A549 (cell line): ENCODE measurements at regions of chr19 and their contacts with region 1.

Region 1: GRCh38 chr19:37906869-37907734 is at the start of gene SIPA1L3:
- DNase-seq: peak; percentile 99
- ATAC-seq: peak; percentile 91 to 97
- H3K4me3 ChIP-seq: peak within 1 kb of the TSS; percentile 69
- H3K27ac ChIP-seq: peak within 1 kb of the TSS; percentile 83 to 87
- H3K4me1 ChIP-seq: peaks cover 30% of the 10 kb centered on the region
- CTCF ChIP-seq: no peak; the same call in 2 of the 3 replicates
- EP300 ChIP-seq: no peak; a peak in 1 of 5 replicates
- POLR2A ChIP-seq: peak; percentile 74
- RAD21 ChIP-seq: peak; percentile 16 to 45
- polyA plus RNA-seq, gene SIPA1L3: 28.9 and 47.8 TPM in 2 replicates

Region 2: DNA sequence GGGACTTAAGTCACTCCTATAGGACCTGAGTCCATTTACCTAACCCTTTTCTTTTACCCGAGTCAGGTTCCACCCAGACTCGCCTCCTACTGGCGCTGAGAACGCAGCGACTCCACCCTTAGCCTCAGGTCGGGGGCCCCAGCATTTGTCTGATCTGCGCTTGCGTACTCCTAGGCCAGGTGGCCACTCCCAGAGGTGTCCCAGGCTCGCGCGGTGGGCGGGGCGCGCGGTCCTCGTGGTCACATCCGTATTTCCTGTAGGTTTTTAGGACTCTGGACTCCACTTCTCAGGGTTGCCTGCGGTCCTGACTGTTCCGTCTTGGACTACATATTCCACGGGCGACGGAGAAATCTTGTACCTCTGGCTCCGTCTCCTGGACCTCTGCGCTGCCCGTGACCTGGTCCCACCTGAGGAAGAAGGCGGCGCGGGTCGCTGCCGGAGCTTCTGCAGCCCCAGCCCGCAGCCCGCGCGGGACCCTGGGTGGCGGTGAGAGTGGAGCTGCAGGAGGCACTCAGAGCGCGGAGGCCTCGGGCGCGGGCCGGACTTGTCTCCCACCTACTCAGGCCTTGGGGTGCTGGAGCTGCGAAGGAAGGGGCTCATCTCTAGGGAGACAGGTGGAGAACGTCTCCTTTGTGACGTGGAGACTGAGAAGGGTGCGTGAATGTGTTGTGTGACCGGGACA is 116.7 kb before region 1 on chr19:
- CTCF ChIA-PET with region 1: no interaction called
- POLR2A ChIA-PET with region 1: no interaction called
- DNase-seq: no peak
- ATAC-seq: no peak; a peak in 1 of 6 replicates
- H3K4me3 ChIP-seq: no peak overlapping the region
- H3K27ac ChIP-seq: no peak overlapping the region
- H3K4me1 ChIP-seq: no peaks in the 10 kb centered on the region
- CTCF ChIP-seq: no peak
- EP300 ChIP-seq: no peak
- POLR2A ChIP-seq: no peak
- RAD21 ChIP-seq: no peak

Region 3: GRCh38 chr19:37931881-37932655 is 25.0 kb after region 1 on chr19:
- CTCF ChIA-PET with region 1: interaction called, 230 read pairs
- POLR2A ChIA-PET with region 1: interaction called, 57 read pairs
- DNase-seq: peak; percentile 96 to 97
- ATAC-seq: peak; percentile 72 to 86
- H3K4me3 ChIP-seq: peak overlapping the region; percentile 51
- H3K27ac ChIP-seq: peak overlapping the region; percentile 88 to 95
- H3K4me1 ChIP-seq: peaks cover 61% of the 10 kb centered on the region
- CTCF ChIP-seq: no peak
- EP300 ChIP-seq: peak in 1 of 2 experiments; percentile 63; a peak in 1 of 5 replicates
- POLR2A ChIP-seq: peak; percentile 66
- RAD21 ChIP-seq: peak; percentile 22 to 46

Region 4: GRCh38 chr19:38004521-38005223 is 97.6 kb after region 1 on chr19:
- CTCF ChIA-PET with region 1: interaction called, 391 read pairs
- POLR2A ChIA-PET with region 1: interaction called, 12 read pairs
- DNase-seq: peak; percentile 90 to 91
- ATAC-seq: peak; percentile 83 to 89
- H3K4me3 ChIP-seq: no peak overlapping the region
- H3K27ac ChIP-seq: peak overlapping the region; percentile 30 to 61
- H3K4me1 ChIP-seq: peaks cover 40% of the 10 kb centered on the region
- CTCF ChIP-seq: no peak
- EP300 ChIP-seq: no peak
- POLR2A ChIP-seq: no peak
- RAD21 ChIP-seq: no peak

Region 5: DNA sequence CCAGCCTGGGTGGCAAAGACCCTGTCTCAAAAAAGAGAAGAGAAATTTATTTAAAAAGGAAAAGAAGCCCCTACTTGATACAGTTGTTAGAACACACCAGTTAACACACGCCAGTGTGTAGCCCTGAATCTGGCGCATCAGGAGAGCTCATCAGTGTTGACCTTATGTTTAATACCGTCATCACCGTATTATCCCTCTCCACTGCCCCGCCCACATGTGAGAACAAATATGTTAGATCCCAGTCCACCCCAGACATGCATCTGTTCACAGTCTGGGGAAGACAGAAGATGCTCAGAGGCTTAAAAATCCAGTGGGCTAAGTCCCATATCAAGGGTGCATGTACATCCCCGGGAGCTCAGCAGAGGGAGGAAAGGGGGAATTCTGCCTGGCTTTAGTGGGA is 161.7 kb after region 1 on chr19:
- CTCF ChIA-PET with region 1: interaction called, 408 read pairs
- POLR2A ChIA-PET with region 1: no interaction called
- DNase-seq: no peak
- ATAC-seq: no peak
- H3K4me3 ChIP-seq: no peak overlapping the region
- H3K27ac ChIP-seq: peak overlapping the region in 1 of 2 experiments; percentile 84; a peak in 3 of 6 replicates
- H3K4me1 ChIP-seq: peaks cover 20% of the 10 kb centered on the region
- CTCF ChIP-seq: no peak
- EP300 ChIP-seq: no peak
- POLR2A ChIP-seq: no peak
- RAD21 ChIP-seq: no peak

Region 6: DNA sequence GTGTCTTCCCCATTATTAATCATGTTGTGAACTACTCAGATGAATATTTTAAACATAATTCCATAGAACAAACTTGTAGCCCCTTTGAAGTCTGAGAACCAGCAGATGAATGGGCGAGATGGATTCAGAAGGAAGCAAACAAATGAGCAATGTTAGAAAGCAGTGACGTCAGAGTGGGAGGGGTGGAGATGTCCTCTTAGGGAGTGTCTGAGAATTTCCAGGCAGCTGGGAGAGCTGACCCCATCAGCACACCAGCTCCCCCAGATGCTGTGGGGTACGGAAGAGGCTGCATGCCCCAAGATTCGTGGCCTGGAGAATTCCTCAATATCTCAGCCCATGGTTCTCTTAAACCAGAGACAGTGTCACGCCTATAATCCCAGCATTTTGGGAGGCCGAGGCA is 248.4 kb after region 1 on chr19:
- CTCF ChIA-PET with region 1: interaction called, 53 read pairs
- POLR2A ChIA-PET with region 1: no interaction called
- DNase-seq: peak in 1 of 2 experiments; percentile 59
- ATAC-seq: peak in 1 of 2 experiments; percentile 34; a peak in 3 of 6 replicates
- H3K4me3 ChIP-seq: no peak overlapping the region
- H3K27ac ChIP-seq: no peak overlapping the region
- H3K4me1 ChIP-seq: no peaks in the 10 kb centered on the region
- CTCF ChIP-seq: no peak
- EP300 ChIP-seq: no peak
- POLR2A ChIP-seq: no peak
- RAD21 ChIP-seq: no peak

Region 7: GRCh38 chr19:38224014-38224862 is 317.1 kb after region 1 on chr19 and contains the start of gene DPF1:
- CTCF ChIA-PET with region 1: interaction called, 187 read pairs
- POLR2A ChIA-PET with region 1: interaction called, 4 read pairs
- DNase-seq: peak; percentile 92 to 100
- ATAC-seq: peak; percentile 79 to 93
- H3K4me3 ChIP-seq: peak within 1 kb of the TSS; percentile 48
- H3K27ac ChIP-seq: peak within 1 kb of the TSS; percentile 34 to 80
- H3K4me1 ChIP-seq: peaks cover 24% of the 10 kb centered on the region
- CTCF ChIP-seq: peak; percentile 42
- EP300 ChIP-seq: no peak
- POLR2A ChIP-seq: peak; percentile 23; the same call in 1 of the 2 replicates
- RAD21 ChIP-seq: peak; percentile 37 to 48; a peak in 4 of 5 replicates
- polyA plus RNA-seq, gene DPF1: 1.3 and 2.1 TPM in 2 replicates

Region 8: GRCh38 chr19:38304866-38305429 is 397.8 kb after region 1 on chr19:
- CTCF ChIA-PET with region 1: interaction called, 10 read pairs
- POLR2A ChIA-PET with region 1: no interaction called
- DNase-seq: peak; percentile 100
- ATAC-seq: peak; percentile 60 to 85
- H3K4me3 ChIP-seq: peak overlapping the region; percentile 60
- H3K27ac ChIP-seq: peak overlapping the region; percentile 92 to 95
- H3K4me1 ChIP-seq: peaks cover 50% of the 10 kb centered on the region
- CTCF ChIP-seq: no peak
- EP300 ChIP-seq: no peak; a peak in 1 of 5 replicates
- POLR2A ChIP-seq: peak; percentile 82
- RAD21 ChIP-seq: peak; percentile 1 to 43; a peak in 2 of 5 replicates